ENCODE measurements at regions of chr9 and their contacts with region 1.

Region 1: GRCh38 chr9:20028849-20029231 is 240.0 kb upstream of the SLC24A2 start:
- DNase-seq: no peak
- H3K4me3 ChIP-seq: no peak overlapping the region
- H3K27ac ChIP-seq: no peak overlapping the region
- H3K4me1 ChIP-seq: no peaks in the 10 kb centered on the region
- H3K27me3 ChIP-seq: no peaks in the 10 kb centered on the region
- CTCF ChIP-seq: no peak

Region 2: GRCh38 chr9:20319641-20320337 is 290.9 kb after region 1 on chr9:
- CTCF ChIA-PET with region 1: no interaction called
- POLR2A ChIA-PET with region 1: no interaction called
- intact Hi-C with region 1: loop called (anchors 5 kb)
- DNase-seq: no peak
- H3K4me3 ChIP-seq: no peak overlapping the region
- H3K27ac ChIP-seq: no peak overlapping the region
- H3K4me1 ChIP-seq: no peaks in the 10 kb centered on the region
- H3K27me3 ChIP-seq: no peaks in the 10 kb centered on the region
- CTCF ChIP-seq: no peak